A549 (cell line): ENCODE measurements at regions of chr3 and their contacts with region 1.

Region 1: DNA sequence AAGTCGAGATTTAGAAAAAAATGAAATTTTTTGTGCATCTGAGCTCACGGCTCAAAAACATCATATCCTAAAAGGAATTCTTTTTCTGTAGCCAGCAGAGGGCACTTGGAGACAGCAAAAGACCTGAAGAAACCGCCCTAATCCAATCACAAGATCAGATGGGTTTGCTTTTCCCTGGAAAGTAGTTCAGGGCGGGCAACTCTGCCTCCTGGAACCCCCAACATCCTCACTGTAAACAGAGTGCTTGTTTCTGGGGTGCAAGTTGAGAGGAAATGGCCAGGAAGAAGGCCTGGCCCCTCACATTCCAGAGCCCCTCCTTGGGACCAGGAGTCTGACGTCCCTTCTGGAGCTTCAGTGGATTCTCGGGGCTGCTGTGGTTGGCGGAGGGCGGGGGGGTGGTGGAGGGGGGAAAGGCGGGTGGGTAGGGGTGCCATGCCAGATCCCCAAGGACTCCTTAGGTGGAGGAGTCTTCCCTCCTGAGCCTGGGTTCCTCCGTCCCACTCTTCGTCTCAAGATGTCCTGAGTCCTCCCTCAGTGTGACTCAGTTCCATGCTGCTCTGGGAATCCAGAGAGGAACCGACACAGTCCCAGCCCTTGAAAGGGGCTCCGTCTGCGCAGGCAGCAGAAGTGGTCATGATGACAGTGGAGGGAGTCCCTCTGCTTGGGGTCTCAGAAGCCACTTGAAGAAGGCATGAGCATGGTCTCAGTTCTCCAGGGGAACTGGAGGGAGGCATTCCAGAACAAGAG is 35.9 kb downstream of the CCK start:
- DNase-seq: peak; percentile 52 to 57
- ATAC-seq: peak; percentile 62 to 85; a peak in 5 of 6 replicates
- H3K4me3 ChIP-seq: no peak overlapping the region
- H3K27ac ChIP-seq: peak overlapping the region; percentile 33 to 49; a peak in 2 of 6 replicates
- H3K4me1 ChIP-seq: 0 out of 3 replicates have a peak, but pooled peaks cover 3% of the 10 kb centered on the region
- CTCF ChIP-seq: peak; percentile 77
- EP300 ChIP-seq: no peak
- POLR2A ChIP-seq: no peak
- RAD21 ChIP-seq: peak; percentile 82

Region 2: DNA sequence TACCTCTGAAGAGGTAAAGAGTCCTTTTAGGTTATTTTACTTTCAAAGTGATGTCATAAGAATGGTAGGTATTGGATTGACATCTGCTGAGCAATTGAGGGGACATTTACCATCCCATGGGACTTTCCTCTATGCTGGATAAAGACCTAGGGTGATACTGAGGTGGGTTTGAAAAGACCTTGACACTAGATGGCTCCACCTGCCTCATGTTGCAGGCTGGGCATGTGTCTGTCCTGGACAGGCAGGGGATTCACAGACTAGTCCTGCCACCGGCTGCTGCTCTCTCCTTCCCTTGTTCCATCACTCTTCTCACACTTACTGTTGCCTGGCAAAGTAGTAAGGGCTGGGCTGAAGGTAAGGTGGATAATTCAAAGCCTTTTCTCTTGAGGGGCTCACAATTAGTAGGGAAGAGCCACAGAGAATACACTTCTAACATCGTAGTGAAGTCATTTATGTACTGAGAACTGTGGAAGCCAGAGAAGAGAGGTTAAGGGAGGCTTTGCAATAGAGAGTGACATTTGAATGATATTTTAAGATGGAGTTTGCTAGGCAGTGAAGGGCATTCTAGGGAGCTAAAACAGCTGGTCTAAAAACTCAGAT is 111.3 kb before region 1 on chr3:
- CTCF ChIA-PET with region 1: interaction called, 20 read pairs
- POLR2A ChIA-PET with region 1: no interaction called
- DNase-seq: peak; percentile 63 to 72
- ATAC-seq: peak; percentile 94
- H3K4me3 ChIP-seq: no peak overlapping the region
- H3K27ac ChIP-seq: 0 out of 6 replicates have a peak overlapping the region, but pooled peaks of 1 of the 2 experiments have one; percentile 29
- H3K4me1 ChIP-seq: peaks cover 15% of the 10 kb centered on the region
- CTCF ChIP-seq: peak; percentile 63
- EP300 ChIP-seq: no peak
- POLR2A ChIP-seq: no peak
- RAD21 ChIP-seq: peak; percentile 70 to 78

Region 3: DNA sequence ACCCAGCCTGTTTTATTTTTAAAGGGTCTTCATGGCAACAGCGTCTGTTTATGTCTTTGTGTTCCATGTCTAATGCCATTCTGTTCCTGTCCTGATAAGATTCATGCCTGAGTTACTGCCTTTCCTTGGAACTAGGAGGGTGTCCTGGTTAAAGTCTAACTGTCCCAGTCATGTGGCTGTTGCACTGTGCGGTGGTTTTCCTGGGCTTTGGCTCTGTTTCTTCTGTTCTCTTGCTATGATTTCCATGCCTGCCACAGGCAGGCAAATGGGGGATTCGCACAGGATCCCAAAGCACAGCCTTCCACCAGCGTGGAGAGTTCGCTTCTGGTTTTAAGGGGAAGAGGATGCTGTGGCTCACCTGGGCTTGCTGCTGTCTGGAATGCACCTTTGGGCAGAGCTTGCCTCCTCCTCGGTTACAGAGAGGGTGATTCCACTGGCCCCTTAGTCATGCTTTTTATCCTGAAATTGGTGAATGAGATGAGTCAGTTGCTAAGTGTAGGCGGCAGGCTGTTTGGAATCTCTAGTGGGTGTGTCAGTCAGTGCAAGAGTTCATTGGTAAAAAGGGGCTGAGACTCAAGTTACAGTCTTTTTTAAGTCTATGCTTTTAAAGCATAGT is 50.9 kb before region 1 on chr3:
- CTCF ChIA-PET with region 1: no interaction called
- POLR2A ChIA-PET with region 1: no interaction called
- DNase-seq: peak; percentile 66 to 71
- ATAC-seq: peak; percentile 97 to 98
- H3K4me3 ChIP-seq: no peak overlapping the region
- H3K27ac ChIP-seq: peak overlapping the region; percentile 50 to 78; a peak in 5 of 6 replicates
- H3K4me1 ChIP-seq: peaks cover 20% of the 10 kb centered on the region
- CTCF ChIP-seq: no peak
- EP300 ChIP-seq: no peak
- POLR2A ChIP-seq: no peak
- RAD21 ChIP-seq: no peak

Region 4: DNA sequence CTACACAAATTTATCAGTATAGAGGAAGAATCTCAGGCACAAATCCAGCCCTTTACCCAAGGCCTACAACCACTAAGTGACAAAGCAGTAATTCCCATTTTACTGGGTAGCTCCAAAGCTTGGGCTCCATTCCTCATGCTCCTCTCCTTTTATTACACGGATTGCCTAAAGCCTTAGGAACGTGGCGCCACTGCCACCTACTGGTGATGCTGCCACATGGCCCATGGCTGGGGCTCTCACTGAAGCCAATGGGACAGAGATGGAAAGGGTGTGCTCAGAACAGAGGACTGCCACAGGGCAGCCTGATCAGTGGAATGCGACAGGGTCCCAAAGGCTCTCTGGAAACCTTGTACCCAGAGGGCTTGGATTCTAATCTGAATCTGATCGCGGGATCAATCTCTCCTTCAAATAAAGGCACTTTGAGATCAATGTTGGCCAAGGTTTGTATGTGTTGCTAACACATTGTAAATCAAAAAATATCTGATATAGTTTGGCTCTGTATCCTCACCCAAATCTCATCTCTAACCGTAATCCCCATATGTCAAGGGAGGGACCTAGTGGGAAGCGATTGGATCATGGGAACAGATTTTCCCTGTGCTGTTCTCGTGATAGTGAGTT is 213.8 kb after region 1 on chr3:
- CTCF ChIA-PET with region 1: interaction called, 31 read pairs
- POLR2A ChIA-PET with region 1: no interaction called
- DNase-seq: peak; percentile 60 to 76
- ATAC-seq: peak; percentile 97 to 99
- H3K4me3 ChIP-seq: no peak overlapping the region
- H3K27ac ChIP-seq: no peak overlapping the region
- H3K4me1 ChIP-seq: no peaks in the 10 kb centered on the region
- CTCF ChIP-seq: peak; percentile 74
- EP300 ChIP-seq: no peak
- POLR2A ChIP-seq: no peak
- RAD21 ChIP-seq: peak; percentile 83 to 91

Region 5: GRCh38 chr3:42539869-42540714 is 310.0 kb after region 1 on chr3:
- CTCF ChIA-PET with region 1: interaction called, 32 read pairs
- POLR2A ChIA-PET with region 1: no interaction called
- DNase-seq: peak; percentile 44 to 53
- ATAC-seq: peak; percentile 49 to 85; a peak in 3 of 6 replicates
- H3K4me3 ChIP-seq: no peak overlapping the region
- H3K27ac ChIP-seq: no peak overlapping the region; a peak in 1 of 6 replicates
- H3K4me1 ChIP-seq: peaks cover 5% of the 10 kb centered on the region; the same call in 2 of the 3 replicates
- CTCF ChIP-seq: peak; percentile 49
- EP300 ChIP-seq: no peak
- POLR2A ChIP-seq: no peak
- RAD21 ChIP-seq: peak; percentile 28 to 29; a peak in 2 of 5 replicates

Region 6: GRCh38 chr3:42547401-42547945 is 317.4 kb after region 1 on chr3:
- CTCF ChIA-PET with region 1: interaction called, 32 read pairs
- POLR2A ChIA-PET with region 1: no interaction called
- DNase-seq: peak; percentile 47 to 55
- ATAC-seq: peak; percentile 78 to 90; a peak in 5 of 6 replicates
- H3K4me3 ChIP-seq: no peak overlapping the region
- H3K27ac ChIP-seq: peak overlapping the region in 1 of 2 experiments; percentile 25; a peak in 1 of 6 replicates
- H3K4me1 ChIP-seq: peaks cover 13% of the 10 kb centered on the region; the same call in 2 of the 3 replicates
- CTCF ChIP-seq: peak; percentile 77
- EP300 ChIP-seq: no peak
- POLR2A ChIP-seq: no peak
- RAD21 ChIP-seq: peak; percentile 27 to 38; a peak in 3 of 5 replicates